ENCODE measurements at regions of chr11 and their contacts with region 1.

Region 1: GRCh38 chr11:68498321-68498720 is 37.8 kb downstream of the PPP6R3 start:
- DNase-seq: no peak

Region 2: GRCh38 chr11:68524681-68525080 is 26.4 kb after region 1 on chr11:
- intact Hi-C with region 1: loop called in 1 of 2 experiments (anchors 1 kb)
- DNase-seq: no peak

Region 3: GRCh38 chr11:68821670-68822069 is 323.3 kb after region 1 on chr11:
- intact Hi-C with region 1: loop called in 1 of 2 experiments (anchors 5 kb)
- DNase-seq: no peak